ENCODE measurements at regions of chr14 and their contacts with region 1.

Region 1: DNA sequence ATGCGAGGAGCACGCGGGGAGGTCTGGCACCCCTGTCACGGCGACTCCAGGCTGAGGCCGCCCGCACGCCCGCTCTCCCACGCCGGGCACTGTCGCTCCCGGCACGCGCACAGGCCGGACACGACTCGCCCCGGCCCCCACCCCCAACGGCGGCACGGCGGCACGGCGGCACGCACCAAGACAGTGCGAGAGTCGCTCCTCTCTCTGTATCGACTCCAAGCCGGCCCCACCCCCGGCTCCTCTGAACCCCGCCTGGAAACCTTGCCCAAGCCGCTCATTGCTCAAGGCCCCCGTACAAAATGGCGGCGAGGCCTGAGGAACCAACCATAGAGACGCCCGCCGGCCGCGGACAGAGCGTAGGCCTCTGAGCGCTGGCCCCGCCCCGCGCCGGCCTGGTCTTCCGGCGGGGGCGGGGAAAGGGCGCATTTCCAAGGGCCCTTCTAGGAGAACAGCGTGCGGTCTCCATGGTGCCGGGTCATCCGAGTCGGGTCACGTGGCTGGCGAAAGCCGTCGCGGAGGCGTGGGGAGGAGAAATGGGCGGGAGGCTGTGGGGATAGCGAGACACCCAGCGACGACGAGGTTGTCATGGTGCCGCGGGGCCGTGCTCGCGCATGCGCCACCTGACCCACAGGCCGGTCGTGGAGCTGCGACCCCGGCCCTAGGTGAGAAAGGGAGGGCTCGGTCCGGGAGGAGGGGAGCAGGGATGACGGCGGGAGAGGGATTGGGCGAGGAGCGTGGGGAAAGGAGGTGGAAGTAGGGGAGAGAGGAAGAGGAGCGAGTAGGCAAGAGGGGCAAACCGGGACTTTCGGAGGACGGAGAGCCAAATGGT is at the start of gene CIPC:
- DNase-seq: peak; percentile 98 to 100 (median 100)

Region 2: DNA sequence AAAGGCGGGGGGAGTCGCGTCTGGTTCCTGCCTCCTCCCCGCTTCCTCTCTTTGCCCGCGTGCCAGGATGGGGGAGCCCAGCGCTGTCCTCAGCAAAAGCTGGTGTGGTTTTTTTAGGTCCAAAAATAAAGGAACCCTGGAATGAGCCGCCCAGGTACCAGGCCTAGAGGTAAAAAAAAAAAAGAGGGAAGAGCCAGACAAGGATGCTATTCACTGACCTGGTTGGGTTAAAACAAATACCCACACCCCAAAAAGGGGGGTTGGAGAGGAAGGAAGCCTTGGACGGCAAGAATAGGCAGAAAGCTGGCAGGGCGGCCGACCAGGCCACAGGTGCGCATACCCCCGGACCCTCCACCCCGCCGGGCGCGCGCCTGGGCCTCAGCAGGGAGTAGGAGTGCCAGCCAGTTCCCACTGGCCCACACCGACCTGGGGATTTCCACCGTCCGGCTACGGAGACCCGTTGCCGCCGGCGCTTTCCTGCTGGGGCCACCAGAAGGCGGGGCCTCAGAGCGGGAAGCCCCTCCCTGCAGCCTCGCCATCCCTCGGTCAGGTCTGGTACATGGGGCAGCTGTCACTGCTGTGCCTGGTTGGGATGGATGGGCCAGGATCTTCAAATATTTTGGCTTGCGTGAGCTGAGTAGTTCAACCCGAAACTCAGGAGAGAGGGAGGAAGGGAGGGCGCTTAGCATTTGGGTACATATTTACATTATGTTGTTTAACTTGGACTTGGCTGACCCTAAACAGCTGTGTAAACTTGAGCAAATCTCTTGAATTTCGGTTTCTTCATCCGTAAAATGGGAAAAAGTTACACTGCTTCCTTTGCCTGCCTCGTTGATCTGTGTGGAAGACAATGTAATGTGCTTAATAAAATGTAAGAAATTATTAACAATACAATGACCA is 64.0 kb before region 1 on chr14:
- intact Hi-C with region 1: loop called (anchors 2 kb)
- DNase-seq: peak in 36 of 42 donors; percentile 26 to 84 (median 70)

Measured in head of caudate nucleus (tissue), 42 donors.